Heart right ventricle (tissue), 16 donors: ENCODE measurements at regions of chr22 and their contacts with region 1.

Region 1: DNA sequence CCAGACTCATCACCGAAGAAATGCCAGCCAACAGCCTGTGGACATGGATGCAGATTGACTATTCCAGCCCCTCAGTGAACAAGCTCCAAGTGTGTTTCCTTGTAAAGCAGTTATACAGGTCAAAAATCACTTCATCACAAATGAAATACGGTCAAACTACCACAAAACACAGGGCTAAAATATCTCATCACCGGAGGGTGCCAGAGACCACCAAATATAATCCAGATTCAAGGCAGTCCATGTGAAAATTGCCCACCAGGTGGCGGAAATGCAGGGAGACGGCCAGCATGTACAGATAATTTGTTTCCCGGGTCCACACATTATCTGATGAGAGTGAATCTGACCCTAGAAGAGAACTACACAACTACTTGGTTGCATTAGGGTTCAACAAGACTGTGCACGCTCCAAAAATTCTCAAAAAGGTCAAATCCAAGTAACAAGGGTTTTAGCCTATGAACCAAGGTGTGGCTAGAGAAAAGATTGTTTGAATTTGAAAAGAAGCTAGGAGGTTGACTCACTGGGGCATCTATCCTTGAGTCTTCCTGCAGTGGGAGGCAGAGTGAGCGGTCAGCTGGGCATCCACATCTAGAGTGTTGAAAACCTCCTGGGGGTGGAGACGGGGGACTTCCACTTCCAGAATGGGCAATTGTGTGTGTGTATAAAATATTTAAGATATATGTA is 71.7 kb downstream of the IGLL5 start:
- DNase-seq: peak; percentile 45 to 81
- ATAC-seq: peak; percentile 52 to 87 (median 77)
- H3K4me3 ChIP-seq: no peak overlapping the region
- H3K27ac ChIP-seq: peak overlapping the region in 7 of 10 donors; percentile 54 to 77 (median 73)
- H3K4me1 ChIP-seq: peaks cover 0 to 21% (median 6%) of the 10 kb centered on the region in 9 donors
- H3K27me3 ChIP-seq: peaks cover 0 to 24% (median 15%) of the 10 kb centered on the region in 7 donors
- CTCF ChIP-seq: peak; percentile 86 to 99 (median 93)

Region 2: DNA sequence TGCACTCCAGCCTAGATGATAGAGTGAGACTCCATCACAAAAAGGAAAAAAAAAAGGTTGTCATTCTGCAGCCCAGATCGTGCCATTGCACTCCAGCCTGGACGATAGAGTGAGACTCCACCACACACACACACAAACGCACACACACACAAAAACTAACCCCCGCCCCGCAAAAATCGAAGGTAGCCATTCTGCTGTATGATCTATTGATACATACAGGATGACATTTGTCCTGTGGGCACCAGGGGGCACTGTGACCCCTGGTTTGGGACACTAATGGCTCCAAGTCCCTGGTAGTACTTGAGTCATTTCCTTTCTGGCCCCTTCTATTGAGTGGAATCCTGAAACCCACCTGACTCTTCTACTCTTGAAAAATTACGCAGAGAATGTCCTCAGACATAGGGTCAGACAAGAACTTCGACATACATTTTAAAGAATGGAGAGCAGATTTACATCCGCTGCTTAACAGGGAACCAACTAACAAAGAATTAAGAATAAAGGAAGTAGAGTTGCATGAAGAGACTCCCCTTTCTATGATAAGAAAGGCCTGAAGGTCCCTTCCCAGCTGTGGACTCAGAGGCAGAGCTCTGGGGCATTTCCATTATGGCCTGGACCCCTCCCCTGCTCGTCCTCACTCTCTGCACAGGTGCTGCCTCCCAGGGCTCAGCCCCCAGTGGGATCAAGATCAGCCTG is 365.2 kb before region 1 on chr22:
- intact Hi-C with region 1: loop called in 1 of 10 experiments (anchors 10 kb)
- DNase-seq: peak in 1 of 2 donors; percentile 23
- ATAC-seq: no peak
- H3K4me3 ChIP-seq: no peak overlapping the region
- H3K27ac ChIP-seq: no peak overlapping the region
- H3K4me1 ChIP-seq: no peaks in the 10 kb centered on the region
- H3K27me3 ChIP-seq: peaks cover 0 to 28% (median 4%) of the 10 kb centered on the region in 7 donors
- CTCF ChIP-seq: peak; percentile 19 to 73 (median 56)

Region 3: DNA sequence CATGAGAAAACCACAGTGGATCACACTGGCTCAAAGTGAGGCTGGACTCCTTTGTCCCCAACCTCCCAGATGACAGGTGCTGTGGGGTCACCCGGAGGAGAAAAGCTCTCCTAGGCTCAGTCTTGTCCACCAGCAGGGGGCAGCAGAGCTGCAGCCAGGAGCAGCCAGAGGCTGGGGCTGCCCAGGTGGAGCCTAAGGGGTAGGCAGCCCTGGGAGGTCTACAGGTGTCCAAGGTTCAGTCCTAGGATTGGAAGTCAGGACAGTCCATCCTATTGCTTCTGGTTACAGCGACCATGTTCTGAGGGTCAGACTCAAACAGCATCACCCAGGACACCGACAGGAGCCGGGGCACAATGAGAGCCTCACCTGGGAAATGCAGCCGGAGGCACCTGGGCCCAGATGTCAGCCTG is 149.3 kb before region 1 on chr22:
- intact Hi-C with region 1: loop called in 3 of 10 experiments (anchors 5 to 10 kb)
- DNase-seq: peak in 1 of 2 donors; percentile 40
- ATAC-seq: peak in 6 of 8 donors; percentile 46 to 74 (median 70)
- H3K4me3 ChIP-seq: no peak overlapping the region
- H3K27ac ChIP-seq: no peak overlapping the region
- H3K4me1 ChIP-seq: no peaks in the 10 kb centered on the region
- H3K27me3 ChIP-seq: peaks cover 0 to 33% (median 5%) of the 10 kb centered on the region in 7 donors
- CTCF ChIP-seq: peak in 8 of 9 donors; percentile 31 to 86 (median 74)

Region 4: DNA sequence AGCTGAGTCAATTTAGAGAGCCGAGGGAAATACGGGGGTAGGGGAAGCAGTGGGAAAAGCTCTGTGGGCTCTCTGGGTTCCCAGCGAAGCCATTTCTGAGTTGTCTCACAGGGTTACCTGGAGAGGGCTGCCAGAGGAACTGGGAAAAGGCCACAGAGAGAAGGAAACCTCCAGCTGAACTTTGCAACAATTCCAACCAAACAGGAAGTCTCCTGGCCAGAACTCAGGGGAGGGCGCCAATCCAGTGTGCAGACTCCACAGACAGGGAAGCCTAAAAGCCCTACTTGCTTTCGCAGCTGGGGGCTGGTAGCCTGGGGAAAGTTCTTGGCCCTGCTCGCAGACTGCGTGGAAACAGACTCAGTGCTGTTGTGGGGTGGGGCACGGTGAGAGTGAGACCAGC is 88.0 kb after region 1 on chr22:
- intact Hi-C with region 1: loop called in 2 of 10 experiments (anchors 2 to 5 kb)
- DNase-seq: peak; percentile 32 to 44
- ATAC-seq: peak in 7 of 8 donors; percentile 58 to 95 (median 89)
- H3K4me3 ChIP-seq: no peak overlapping the region
- H3K27ac ChIP-seq: peak overlapping the region in 7 of 10 donors; percentile 33 to 75 (median 59)
- H3K4me1 ChIP-seq: peaks cover 0 to 18% (median 0%) of the 10 kb centered on the region in 9 donors
- H3K27me3 ChIP-seq: peaks cover 0 to 14% (median 0%) of the 10 kb centered on the region in 7 donors
- CTCF ChIP-seq: no peak

Region 5: GRCh38 chr22:23281406-23282088 is 322.3 kb after region 1 on chr22:
- intact Hi-C with region 1: loop called in 5 of 10 experiments (anchors 5 to 10 kb)
- DNase-seq: peak; percentile 84 to 85
- ATAC-seq: peak; percentile 74 to 92 (median 84)
- H3K4me3 ChIP-seq: no peak overlapping the region
- H3K27ac ChIP-seq: peak overlapping the region in 6 of 10 donors; percentile 20 to 59 (median 38)
- H3K4me1 ChIP-seq: peaks cover 9 to 36% (median 26%) of the 10 kb centered on the region in 9 donors
- H3K27me3 ChIP-seq: no peaks in the 10 kb centered on the region
- CTCF ChIP-seq: peak; percentile 83 to 97 (median 95)

Region 6: GRCh38 chr22:23305321-23305910 is 346.1 kb after region 1 on chr22:
- intact Hi-C with region 1: no loop called
- DNase-seq: peak in 1 of 2 donors; percentile 18
- ATAC-seq: peak in 7 of 8 donors; percentile 5 to 58 (median 39)
- H3K4me3 ChIP-seq: peak overlapping the region in 1 of 10 donors; percentile 24
- H3K27ac ChIP-seq: peak overlapping the region; percentile 49 to 88 (median 78)
- H3K4me1 ChIP-seq: peaks cover 10 to 26% (median 24%) of the 10 kb centered on the region in 9 donors
- H3K27me3 ChIP-seq: no peaks in the 10 kb centered on the region
- CTCF ChIP-seq: no peak

Region 7: DNA sequence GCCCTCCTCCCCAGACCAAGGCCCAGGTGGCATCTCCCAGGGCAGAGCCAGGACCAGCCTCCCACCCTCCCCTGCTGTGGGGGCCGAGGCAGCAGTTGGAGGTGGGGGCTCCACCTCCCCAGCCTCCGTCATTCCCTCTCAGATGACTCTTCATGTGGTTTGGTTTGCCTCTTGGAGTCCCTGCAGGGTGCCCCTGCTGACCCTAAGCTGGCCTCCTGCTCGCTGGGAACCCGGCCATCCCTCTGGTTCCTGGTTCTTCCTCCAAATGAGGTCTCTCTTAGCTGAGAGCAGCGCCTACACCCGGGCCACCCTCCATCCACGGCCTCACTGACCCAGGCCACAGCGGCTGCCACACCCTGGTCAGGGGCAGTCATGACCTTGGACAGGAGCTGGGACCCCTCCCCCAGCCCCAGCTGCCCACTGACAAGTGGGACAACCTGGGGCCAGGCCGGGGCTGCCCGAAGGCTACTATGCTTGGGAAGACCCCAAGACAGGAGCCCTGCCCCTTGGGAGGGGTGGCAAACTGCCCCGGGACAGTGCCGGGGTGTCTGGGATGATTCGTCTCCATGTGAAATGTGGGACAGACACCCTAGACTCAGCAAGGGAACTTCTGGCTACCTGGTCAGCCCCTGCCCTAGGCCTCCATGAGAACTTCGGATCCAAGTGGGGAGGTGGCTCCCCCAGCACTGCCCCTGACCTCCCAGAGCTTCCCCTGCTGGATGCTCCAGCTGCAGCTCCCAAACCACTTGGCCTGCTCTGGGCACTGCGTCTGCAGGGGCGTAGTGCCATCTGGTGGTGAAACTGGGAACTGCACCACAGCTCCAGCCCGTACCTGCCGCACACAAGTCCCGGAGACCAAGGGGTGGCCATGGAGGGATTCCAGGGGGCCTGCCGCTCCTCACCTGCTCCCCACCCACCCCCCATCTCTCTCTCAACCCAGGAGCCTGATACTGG is 426.3 kb after region 1 on chr22:
- intact Hi-C with region 1: loop called in 7 of 10 experiments (anchors 2 to 10 kb)
- DNase-seq: peak; percentile 73 to 85
- ATAC-seq: peak; percentile 80 to 91 (median 85)
- H3K4me3 ChIP-seq: no peak overlapping the region
- H3K27ac ChIP-seq: no peak overlapping the region
- H3K4me1 ChIP-seq: peaks cover 0 to 7% (median 0%) of the 10 kb centered on the region in 9 donors
- H3K27me3 ChIP-seq: peaks cover 0 to 11% (median 3%) of the 10 kb centered on the region in 7 donors
- CTCF ChIP-seq: peak; percentile 96 to 100 (median 99)